Activated naive CD8-positive, alpha-beta T cell treated with anti-CD3 and anti-CD28 coated beads, Interleukin-2, amount 10 ng/mL, durations not matched to agents 7 days and 5 days (primary cell): ENCODE measurements at regions of chr6 and their contacts with region 1.

Region 1: GRCh38 chr6:156146891-156147290 is 630.3 kb upstream of the ARID1B start:
- DNase-seq: no peak
- ATAC-seq: no peak
- H3K4me3 Mint-ChIP-seq: no peak overlapping the region
- H3K27ac Mint-ChIP-seq: no peak overlapping the region
- H3K4me1 Mint-ChIP-seq: peaks cover 4% of the 10 kb centered on the region
- H3K27me3 Mint-ChIP-seq: no peaks in the 10 kb centered on the region

Region 2: DNA sequence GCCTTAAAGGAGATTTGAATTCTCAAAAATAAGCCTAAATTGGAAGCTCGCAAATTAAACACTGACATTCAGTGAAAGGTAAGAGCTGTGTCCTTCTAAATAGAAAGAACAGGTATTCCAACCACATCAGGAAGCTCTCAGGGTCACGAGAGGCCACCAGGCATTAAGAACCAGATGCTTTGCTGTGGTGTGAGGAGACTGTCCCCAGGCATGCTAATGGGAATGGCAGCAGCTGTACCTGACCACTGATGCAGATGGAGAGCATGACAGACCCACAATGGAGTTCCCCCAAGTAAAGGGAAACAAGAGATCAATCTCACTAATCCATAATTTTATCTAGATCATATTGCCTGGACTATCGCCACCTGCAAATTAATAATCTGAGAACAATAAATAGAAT is 32.4 kb before region 1 on chr6:
- POLR2A ChIA-PET with region 1: no interaction called
- DNase-seq: no peak
- ATAC-seq: no peak
- H3K4me3 Mint-ChIP-seq: no peak overlapping the region
- H3K27ac Mint-ChIP-seq: no peak overlapping the region
- H3K4me1 Mint-ChIP-seq: no peaks in the 10 kb centered on the region
- H3K27me3 Mint-ChIP-seq: peaks cover 4% of the 10 kb centered on the region

Region 3: GRCh38 chr6:156345700-156346099 is 198.8 kb after region 1 on chr6:
- POLR2A ChIA-PET with region 1: interaction called, 10 read pairs
- DNase-seq: no peak
- ATAC-seq: no peak
- H3K4me3 Mint-ChIP-seq: no peak overlapping the region
- H3K27ac Mint-ChIP-seq: no peak overlapping the region
- H3K4me1 Mint-ChIP-seq: no peaks in the 10 kb centered on the region
- H3K27me3 Mint-ChIP-seq: peaks cover 3% of the 10 kb centered on the region

Region 4: DNA sequence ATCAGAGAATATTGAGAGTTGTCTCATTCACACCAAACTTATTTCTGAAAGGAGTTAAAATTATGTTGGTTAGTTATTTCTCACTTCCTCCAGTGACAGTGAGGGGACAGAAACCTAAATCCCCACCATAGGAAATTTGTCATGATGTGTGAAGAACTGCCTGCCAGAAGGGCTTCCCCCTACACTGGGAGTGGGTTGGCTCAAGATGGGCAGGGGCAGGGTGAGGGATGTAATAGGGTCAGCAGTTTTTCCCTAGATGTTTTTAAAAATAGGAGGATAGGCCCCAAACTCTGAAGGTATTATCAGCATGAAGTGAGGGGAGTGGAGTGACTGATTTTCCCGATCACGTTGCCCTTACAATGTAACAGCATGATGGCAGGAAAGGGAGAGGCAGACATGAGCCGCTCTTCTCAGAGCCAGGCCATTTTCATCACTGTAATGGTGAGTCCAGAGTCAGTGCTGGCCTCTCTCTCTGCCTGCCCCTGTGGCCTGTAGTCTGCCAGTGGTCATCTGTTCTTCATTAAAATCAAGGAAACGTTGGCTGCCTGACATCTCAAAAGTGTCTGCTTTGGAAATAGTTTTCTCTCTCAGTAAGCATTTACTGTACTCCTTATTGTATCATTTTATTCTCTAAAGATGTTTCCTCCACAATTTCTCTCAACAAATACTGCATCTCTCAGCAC is 1774.9 kb after region 1 on chr6:
- POLR2A ChIA-PET with region 1: no interaction called
- DNase-seq: no peak
- ATAC-seq: no peak
- H3K4me3 Mint-ChIP-seq: no peak overlapping the region
- H3K27ac Mint-ChIP-seq: no peak overlapping the region
- H3K4me1 Mint-ChIP-seq: no peaks in the 10 kb centered on the region
- H3K27me3 Mint-ChIP-seq: no peaks in the 10 kb centered on the region